Posterior vena cava (tissue), 2 donors: ENCODE measurements at regions of chr12 and their contacts with region 1.

Region 1: DNA sequence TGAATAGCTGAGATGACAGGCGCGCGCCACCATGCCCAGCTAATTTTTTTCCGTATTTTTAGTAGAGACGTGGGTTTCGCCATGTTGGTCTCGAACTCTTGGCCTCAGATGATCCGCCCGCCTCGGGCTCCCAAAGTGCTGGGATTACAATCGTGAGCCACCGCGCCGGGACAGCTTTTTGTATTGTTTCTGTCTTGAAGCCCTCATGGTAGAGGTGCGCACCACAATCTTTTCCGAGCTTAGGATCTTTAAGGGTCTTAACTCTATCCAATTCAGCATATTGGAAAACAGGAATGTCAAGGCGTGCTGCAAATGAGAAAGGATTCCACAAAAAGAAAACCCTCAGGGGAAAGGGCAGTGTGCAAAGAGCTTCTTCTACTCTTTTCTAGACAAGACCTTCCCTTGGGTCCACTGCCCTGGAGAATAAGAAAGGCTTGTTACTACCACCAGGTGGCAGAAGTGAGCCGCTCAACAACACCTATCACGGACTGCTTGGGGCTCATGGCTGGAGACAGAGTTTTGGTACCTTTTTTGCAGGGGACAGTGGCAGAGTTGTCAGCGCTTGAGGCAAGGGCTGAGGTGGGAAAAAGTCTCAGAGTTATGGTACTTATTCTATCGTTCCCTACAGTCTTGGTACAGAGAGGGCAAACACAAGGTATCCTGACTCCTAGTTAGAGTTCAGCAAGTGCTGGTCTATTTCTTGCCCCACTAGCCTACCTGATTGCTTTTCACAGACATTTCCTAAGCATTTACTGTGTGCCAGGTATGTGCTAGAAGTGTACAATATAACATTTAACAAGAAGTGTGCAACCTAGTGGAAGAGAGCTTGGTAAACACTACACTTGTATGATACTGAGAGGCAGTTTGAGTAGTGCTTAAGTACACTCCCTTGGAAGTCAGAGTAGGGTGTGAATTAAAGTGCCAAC is 16.4 kb upstream of the SP7 start:
- DNase-seq: peak; percentile 92

Region 2: GRCh38 chr12:53419761-53420160 is 67.2 kb after region 1 on chr12:
- intact Hi-C with region 1: loop called (anchors 2 kb)
- DNase-seq: no peak

Region 3: DNA sequence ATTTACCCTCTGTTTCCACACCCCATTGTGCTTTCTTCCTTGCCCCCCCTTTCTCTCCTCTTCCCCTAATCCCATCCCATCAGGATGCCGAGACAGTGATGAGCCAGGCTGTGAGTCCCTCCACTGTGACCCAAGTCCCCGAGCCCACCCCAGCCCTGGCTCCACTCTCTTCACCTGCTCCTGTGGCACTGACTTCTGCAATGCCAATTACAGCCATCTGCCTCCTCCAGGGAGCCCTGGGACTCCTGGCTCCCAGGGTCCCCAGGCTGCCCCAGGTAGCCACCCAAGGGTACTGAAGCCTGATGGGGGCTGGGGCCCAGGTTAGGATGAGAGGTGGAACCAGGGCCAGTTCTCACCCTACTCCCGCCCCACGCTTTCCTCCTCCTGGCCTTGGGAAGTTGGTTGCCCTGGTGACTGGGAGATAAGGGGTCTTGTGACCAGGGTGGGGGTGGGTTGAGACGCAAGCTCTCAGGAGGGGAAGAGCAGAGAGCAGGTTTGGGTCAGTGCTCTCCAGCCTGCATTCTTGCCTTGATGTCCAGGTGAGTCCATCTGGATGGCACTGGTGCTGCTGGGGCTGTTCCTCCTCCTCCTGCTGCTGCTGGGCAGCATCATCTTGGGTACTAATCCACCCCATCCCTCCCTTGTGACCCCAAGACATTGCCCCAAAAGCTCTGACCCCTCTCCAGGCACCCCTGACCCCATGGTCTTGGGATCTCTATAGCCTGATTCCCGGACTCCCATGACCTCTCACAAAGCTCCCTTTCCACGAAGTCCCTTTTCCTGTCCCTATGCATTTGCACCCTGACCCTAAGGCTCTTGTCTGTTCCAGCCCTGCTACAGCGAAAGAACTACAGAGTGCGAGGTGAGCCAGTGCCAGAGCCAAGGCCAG is 72.3 kb after region 1 on chr12:
- intact Hi-C with region 1: loop called (anchors 2 kb)
- DNase-seq: peak; percentile 40